Lower leg skin (tissue), 4 donors: ENCODE measurements at regions of chr5 and their contacts with region 1.

Region 1: DNA sequence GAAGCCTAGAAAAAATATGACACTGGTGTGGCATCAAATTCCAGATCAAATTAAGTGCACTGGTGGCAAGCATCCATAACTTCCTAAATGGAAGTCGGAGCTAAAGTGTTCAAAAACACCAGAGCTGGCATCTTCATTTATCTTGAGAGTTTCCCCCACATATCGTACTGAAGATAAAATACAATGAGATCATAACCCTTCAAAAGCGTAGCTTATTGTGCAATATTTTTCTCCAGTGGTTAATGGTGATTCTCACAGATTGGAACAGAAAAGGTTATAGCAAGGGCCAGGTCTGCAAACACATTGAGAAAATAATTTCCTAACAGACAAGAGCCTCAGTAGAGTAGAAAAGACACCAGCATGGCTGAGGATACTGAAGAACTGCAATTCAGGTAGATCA is 147.6 kb downstream of the SEMA5A start:
- DNase-seq: no peak
- H3K4me3 ChIP-seq: no peak overlapping the region
- CTCF ChIP-seq: no peak
- POLR2A ChIP-seq: no peak

Region 2: GRCh38 chr5:10036136-10036815 is 638.0 kb after region 1 on chr5:
- intact Hi-C with region 1: no loop called
- DNase-seq: no peak
- H3K4me3 ChIP-seq: no peak overlapping the region
- CTCF ChIP-seq: no peak
- POLR2A ChIP-seq: no peak

Region 3: DNA sequence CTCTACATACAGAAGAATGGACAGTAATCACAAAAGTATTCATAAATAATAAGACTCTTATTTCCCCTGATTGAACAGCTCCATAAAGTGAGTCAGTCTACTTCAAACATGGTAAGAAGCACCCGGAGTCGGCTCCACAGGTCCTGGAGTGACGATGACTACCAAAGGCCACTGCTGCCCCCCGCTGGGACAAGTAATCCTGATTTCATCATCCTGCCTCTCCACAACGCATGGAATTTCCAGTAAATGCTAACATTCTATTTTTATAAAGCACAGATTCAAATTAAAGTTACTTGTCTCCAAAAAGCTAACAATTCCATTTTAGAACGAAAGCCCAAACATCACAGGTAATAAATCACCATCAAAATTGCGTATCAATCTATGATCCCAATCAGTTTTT is 835.3 kb after region 1 on chr5:
- intact Hi-C with region 1: loop called (anchors 5 kb)
- DNase-seq: no peak
- H3K4me3 ChIP-seq: no peak overlapping the region
- CTCF ChIP-seq: no peak
- POLR2A ChIP-seq: no peak